ENCODE measurements at regions of chr3 and their contacts with region 1.

Region 1: DNA sequence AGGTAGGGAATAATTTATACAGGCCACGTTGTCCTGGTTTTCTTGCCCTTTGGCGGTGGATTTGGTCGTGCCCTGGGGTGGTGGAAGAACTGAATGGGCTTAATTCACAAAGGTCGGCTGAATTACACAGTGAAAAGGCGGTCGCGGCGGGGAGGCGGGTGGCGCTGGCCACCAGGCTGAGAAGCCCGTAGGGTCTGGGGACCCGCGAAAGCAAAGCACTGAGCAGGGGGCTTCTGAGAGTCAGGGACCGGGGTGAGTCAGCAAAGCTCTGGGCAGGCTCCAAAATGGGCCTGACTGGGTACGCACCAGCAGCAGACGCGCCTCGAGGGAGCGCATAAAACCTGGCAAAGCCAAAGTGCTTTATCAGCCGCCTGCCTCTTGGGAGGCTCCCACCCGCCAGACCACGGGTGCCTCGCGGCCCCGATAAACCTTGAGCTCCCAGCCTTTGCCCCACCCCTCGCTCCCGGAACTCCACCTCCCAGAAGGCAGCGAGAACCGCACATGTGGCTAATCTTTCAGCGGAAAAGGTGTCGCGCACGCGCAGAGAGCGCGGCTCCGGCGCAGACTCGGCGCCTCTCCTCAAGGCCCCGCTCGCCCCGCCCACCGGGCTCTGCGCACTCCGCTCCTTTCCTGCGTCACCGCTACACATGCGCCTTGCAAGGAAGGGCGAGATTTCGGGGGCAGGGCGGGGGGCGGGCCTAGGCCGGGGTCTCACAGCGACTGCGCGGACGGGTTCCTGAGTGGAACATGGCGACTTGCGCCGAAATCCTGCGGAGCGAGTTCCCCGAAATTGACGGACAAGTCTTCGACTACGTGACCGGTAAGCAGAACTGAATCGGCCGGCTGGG is at the start of gene ABCF3:
- DNase-seq: peak; percentile 99
- ATAC-seq: peak; percentile 94
- H3K4me3 ChIP-seq: peak within 1 kb of the TSS; percentile 97
- H3K27ac ChIP-seq: peak within 1 kb of the TSS; percentile 78
- H3K4me1 ChIP-seq: peaks cover 17% of the 10 kb centered on the region
- H3K27me3 ChIP-seq: no peaks in the 10 kb centered on the region
- CTCF ChIP-seq: no peak
- total RNA-seq, gene ABCF3: 84.7 and 85.5 TPM in 2 replicates

Region 2: DNA sequence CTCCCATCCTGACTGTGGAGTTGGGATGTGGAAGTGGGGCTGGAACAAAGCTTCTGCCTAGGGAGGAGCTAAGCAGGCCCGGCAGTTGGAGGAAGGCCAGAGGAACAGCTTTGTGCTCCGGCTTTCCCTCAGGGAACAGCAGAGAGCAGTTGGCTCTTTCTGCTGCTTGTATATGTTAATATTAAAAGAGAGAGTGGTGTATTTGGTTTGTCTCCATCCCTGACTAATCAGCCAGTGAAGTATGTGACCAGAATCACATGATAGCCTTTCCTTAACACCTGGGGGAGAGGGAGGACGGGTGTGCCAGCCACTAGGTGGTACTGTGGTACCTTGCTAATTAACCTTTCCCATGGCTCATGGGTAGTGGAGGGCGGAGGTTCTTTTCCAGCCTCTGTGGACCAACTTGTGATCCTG is 40.6 kb before region 1 on chr3:
- CTCF ChIA-PET with region 1: no interaction called
- POLR2A ChIA-PET with region 1: interaction called, 3 read pairs
- intact Hi-C with region 1: loop called (anchors 5 kb)
- DNase-seq: peak; percentile 72
- ATAC-seq: peak; percentile 92
- H3K4me3 ChIP-seq: no peak overlapping the region
- H3K27ac ChIP-seq: no peak overlapping the region
- H3K4me1 ChIP-seq: no peaks in the 10 kb centered on the region
- H3K27me3 ChIP-seq: no peaks in the 10 kb centered on the region
- CTCF ChIP-seq: peak; percentile 73

Region 3: GRCh38 chr3:184229394-184230080 is 43.9 kb after region 1 on chr3 and contains the start of gene VWA5B2:
- CTCF ChIA-PET with region 1: no interaction called
- POLR2A ChIA-PET with region 1: no interaction called
- intact Hi-C with region 1: loop called (anchors 5 kb)
- DNase-seq: peak; percentile 80
- ATAC-seq: peak; percentile 80
- H3K4me3 ChIP-seq: peak within 1 kb of the TSS; percentile 75
- H3K27ac ChIP-seq: no peak within 1 kb of the TSS
- H3K4me1 ChIP-seq: peaks cover 18% of the 10 kb centered on the region
- H3K27me3 ChIP-seq: peaks cover 10% of the 10 kb centered on the region
- CTCF ChIP-seq: no peak
- total RNA-seq, gene VWA5B2: 1.4 and 1.9 TPM in 2 replicates